Heart right ventricle (tissue), 16 donors: ENCODE measurements at regions of chr6 and their contacts with region 1.

Region 1: GRCh38 chr6:4936681-4937041 is 67.2 kb downstream of the RPP40 start:
- DNase-seq: peak in 1 of 2 donors; percentile 25
- ATAC-seq: peak in 3 of 8 donors; percentile 32 to 51 (median 38)
- H3K4me3 ChIP-seq: no peak overlapping the region
- H3K27ac ChIP-seq: no peak overlapping the region
- H3K4me1 ChIP-seq: peaks cover 6 to 43% (median 31%) of the 10 kb centered on the region in 9 donors
- H3K27me3 ChIP-seq: no peaks in the 10 kb centered on the region
- CTCF ChIP-seq: peak; percentile 36 to 80 (median 68)

Region 2: GRCh38 chr6:4313044-4313686 is 623.5 kb before region 1 on chr6:
- intact Hi-C with region 1: loop called in 9 of 10 experiments (anchors 1 to 10 kb)
- DNase-seq: peak in 1 of 2 donors; percentile 36
- ATAC-seq: peak; percentile 35 to 75 (median 61)
- H3K4me3 ChIP-seq: no peak overlapping the region
- H3K27ac ChIP-seq: peak overlapping the region in 6 of 10 donors; percentile 6 to 57 (median 32)
- H3K4me1 ChIP-seq: peaks cover 3 to 29% (median 20%) of the 10 kb centered on the region in 9 donors
- H3K27me3 ChIP-seq: no peaks in the 10 kb centered on the region
- CTCF ChIP-seq: peak; percentile 13 to 60 (median 48)

Region 3: DNA sequence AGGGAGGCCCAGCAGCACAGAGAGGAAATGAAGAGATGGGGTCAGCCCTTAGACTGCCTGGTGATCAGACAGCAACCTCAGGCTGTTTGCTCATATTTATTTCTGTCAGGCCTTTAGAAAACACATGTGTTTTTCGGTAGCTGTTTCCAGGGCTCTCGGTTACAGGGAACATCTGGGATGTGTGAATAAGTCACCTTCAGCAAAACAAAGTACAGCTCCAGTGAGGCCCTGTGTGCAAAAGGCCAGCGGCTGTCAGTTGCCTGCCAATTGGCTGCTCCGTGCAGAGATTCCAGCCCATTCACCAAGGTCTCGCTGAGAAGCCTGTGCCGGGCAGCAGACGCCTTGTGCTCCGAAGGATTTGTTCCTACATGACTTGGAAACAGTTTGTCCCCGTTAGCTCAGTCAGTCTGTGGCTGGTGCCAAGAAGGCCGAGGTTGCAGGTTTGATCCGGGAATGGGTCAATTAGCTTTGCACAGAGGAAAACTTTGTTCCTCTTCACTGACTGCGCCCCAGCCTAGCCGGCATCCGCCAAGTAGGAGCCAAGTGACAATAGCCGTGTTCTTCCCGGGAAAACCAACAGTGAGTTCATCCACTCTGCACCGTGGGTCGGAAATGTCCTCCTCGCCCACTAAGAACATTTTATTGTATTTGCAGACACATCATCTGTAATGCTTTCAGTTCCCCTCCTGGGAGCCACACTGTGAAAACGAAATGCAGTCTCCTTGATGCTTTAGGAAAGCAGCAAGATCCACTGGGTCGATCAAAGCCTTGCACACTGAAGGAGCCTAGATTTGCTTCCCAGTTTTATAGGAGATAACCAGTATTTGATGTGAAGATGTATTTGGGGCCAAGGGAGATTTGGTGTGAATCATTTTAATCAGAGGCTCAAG is 475.8 kb before region 1 on chr6:
- intact Hi-C with region 1: loop called in 1 of 10 experiments (anchors 10 kb)
- DNase-seq: peak; percentile 39 to 67
- ATAC-seq: peak; percentile 82 to 95 (median 92)
- H3K4me3 ChIP-seq: peak overlapping the region in 2 of 10 donors; percentile 9 to 14
- H3K27ac ChIP-seq: peak overlapping the region; percentile 33 to 77 (median 67)
- H3K4me1 ChIP-seq: peaks cover 5 to 23% (median 19%) of the 10 kb centered on the region in 9 donors
- H3K27me3 ChIP-seq: no peaks in the 10 kb centered on the region
- CTCF ChIP-seq: no peak

Region 4: DNA sequence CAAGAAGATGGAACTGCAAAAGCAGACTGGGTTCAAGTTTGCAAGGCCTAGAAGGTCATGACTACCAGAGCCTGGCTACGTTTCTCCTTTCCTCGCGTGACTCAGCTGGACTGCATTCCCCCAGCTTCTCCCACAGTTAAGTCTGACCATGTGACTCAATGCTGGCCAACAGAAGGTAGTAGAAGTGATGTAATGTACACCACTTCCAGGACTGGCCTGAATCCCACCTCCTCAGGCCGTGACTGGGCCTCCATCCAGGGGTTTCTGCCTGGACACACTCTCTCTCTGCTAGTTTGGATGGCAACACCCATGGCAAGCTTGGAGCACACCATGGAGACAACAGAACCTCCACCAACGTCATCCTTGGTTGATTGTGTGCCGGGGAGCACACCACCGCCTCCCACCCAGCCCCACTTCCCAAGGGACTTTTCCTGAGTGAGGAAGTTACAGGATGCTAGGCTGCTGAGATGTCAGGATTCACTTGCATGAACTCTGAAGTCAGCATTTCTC is 272.5 kb before region 1 on chr6:
- intact Hi-C with region 1: loop called in 1 of 10 experiments (anchors 10 kb)
- DNase-seq: peak; percentile 64 to 74
- ATAC-seq: peak; percentile 81 to 92 (median 86)
- H3K4me3 ChIP-seq: no peak overlapping the region
- H3K27ac ChIP-seq: peak overlapping the region in 5 of 10 donors; percentile 8 to 60 (median 52)
- H3K4me1 ChIP-seq: peaks cover 0 to 19% (median 4%) of the 10 kb centered on the region in 9 donors
- H3K27me3 ChIP-seq: no peaks in the 10 kb centered on the region
- CTCF ChIP-seq: no peak

Region 5: GRCh38 chr6:5250911-5251310 is 314.2 kb after region 1 on chr6:
- intact Hi-C with region 1: no loop called
- DNase-seq: no peak
- ATAC-seq: no peak
- H3K4me3 ChIP-seq: no peak overlapping the region
- H3K27ac ChIP-seq: no peak overlapping the region
- H3K4me1 ChIP-seq: no peaks in the 10 kb centered on the region
- H3K27me3 ChIP-seq: no peaks in the 10 kb centered on the region
- CTCF ChIP-seq: no peak